ENCODE measurements at regions of chr19 and their contacts with region 1.

Region 1: GRCh38 chr19:5154129-5154798 is 185.4 kb downstream of the KDM4B start:
- DNase-seq: peak; percentile 58
- ATAC-seq: peak; percentile 74
- H3K4me3 Mint-ChIP-seq: no peak overlapping the region
- H3K27ac Mint-ChIP-seq: no peak overlapping the region
- H3K4me1 Mint-ChIP-seq: peaks cover 12% of the 10 kb centered on the region
- H3K27me3 Mint-ChIP-seq: no peaks in the 10 kb centered on the region
- CTCF ChIP-seq: no peak

Region 2: DNA sequence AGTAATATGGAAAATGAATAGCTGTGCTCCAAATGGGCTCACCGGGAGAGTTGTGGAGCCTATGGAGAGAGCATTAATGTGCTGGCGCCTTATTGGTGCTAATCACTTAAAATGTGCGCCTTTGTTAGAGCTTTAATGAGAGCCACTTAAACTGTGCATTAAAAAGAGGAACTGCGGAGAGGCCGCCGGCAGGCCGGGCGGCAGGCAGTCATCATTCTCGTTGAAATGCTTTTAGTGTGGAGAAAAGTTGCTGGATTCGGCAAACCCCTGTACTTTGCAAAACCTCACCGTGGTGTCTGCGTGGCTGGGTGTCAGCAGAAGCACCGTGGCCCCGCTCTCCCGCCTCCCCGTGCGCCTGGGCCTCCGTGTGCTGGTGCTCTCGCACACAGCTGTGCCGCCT is 79.9 kb before region 1 on chr19:
- CTCF ChIA-PET with region 1: interaction called, 3 read pairs
- POLR2A ChIA-PET with region 1: no interaction called
- intact Hi-C with region 1: loop called (anchors 2 kb)
- DNase-seq: no peak
- ATAC-seq: peak; percentile 68
- H3K4me3 Mint-ChIP-seq: no peak overlapping the region
- H3K27ac Mint-ChIP-seq: no peak overlapping the region
- H3K4me1 Mint-ChIP-seq: peaks cover 37% of the 10 kb centered on the region
- H3K27me3 Mint-ChIP-seq: no peaks in the 10 kb centered on the region
- CTCF ChIP-seq: no peak

Region 3: GRCh38 chr19:5173975-5174374 is 19.7 kb after region 1 on chr19:
- CTCF ChIA-PET with region 1: no interaction called
- POLR2A ChIA-PET with region 1: no interaction called
- intact Hi-C with region 1: no loop called
- DNase-seq: no peak
- ATAC-seq: no peak
- H3K4me3 Mint-ChIP-seq: no peak overlapping the region
- H3K27ac Mint-ChIP-seq: no peak overlapping the region
- H3K4me1 Mint-ChIP-seq: no peaks in the 10 kb centered on the region
- H3K27me3 Mint-ChIP-seq: no peaks in the 10 kb centered on the region
- CTCF ChIP-seq: no peak